Naive thymus-derived CD4-positive, alpha-beta T cell (primary cell): ENCODE measurements at regions of chr4 and their contacts with region 1.

Region 1: GRCh38 chr4:13548984-13549546 is 4.8 kb upstream of the NKX3-2 start:
- DNase-seq: peak; percentile 50 to 87 (median 68)
- ATAC-seq: peak; percentile 85
- H3K4me3 ChIP-seq: no peak overlapping the region
- H3K4me3 Mint-ChIP-seq: peak overlapping the region; percentile 38 to 87 (median 60)
- H3K27ac ChIP-seq: no peak overlapping the region
- H3K27ac Mint-ChIP-seq: peak overlapping the region in 2 of 9 donors; percentile 15 to 27
- H3K4me1 ChIP-seq: peaks cover 13 to 17% of the 10 kb centered on the region in 2 donors
- H3K4me1 Mint-ChIP-seq: peaks cover 21 to 33% (median 30%) of the 10 kb centered on the region in 7 donors
- H3K27me3 ChIP-seq: peaks cover 24 to 25% of the 10 kb centered on the region in 2 donors
- H3K27me3 Mint-ChIP-seq: peaks cover 70 to 75% (median 73%) of the 10 kb centered on the region in 5 donors

Region 2: DNA sequence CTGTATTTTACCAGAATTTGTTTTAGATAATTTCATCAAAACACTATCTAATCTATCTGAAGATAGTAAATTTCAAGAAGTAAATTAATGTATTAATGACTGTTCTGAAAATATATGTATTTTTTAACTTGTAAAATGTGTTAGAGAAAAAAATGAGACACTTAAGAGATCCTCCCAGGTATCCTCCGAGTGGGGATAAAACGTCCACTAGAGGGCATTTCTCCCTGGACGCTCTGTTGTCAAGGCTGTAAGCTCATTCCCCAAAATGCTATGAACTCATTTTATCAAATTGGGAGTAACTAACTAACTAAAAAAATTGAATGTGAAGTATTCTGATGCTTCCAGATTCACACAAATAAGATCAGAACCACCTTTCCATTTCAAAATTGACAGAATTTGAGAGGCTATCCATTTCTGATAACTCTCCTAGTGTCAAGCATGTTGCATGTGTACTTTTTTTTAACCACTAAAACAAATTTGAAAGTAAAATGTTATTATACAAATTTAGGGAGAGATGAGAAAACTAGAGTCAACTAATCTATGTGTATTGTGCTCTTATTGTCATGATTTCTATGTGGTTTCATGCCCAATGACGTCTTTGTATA is 1783.1 kb before region 1 on chr4:
- CTCF ChIA-PET with region 1: no interaction called
- POLR2A ChIA-PET with region 1: no interaction called
- intact Hi-C with region 1: loop called in 1 of 2 experiments (anchors 5 kb)
- DNase-seq: peak in 4 of 9 donors; percentile 1 to 20 (median 8)
- ATAC-seq: no peak
- H3K4me3 ChIP-seq: no peak overlapping the region
- H3K4me3 Mint-ChIP-seq: no peak overlapping the region
- H3K27ac ChIP-seq: no peak overlapping the region
- H3K27ac Mint-ChIP-seq: no peak overlapping the region
- H3K4me1 ChIP-seq: no peaks in the 10 kb centered on the region
- H3K4me1 Mint-ChIP-seq: no peaks in the 10 kb centered on the region
- H3K27me3 ChIP-seq: no peaks in the 10 kb centered on the region
- H3K27me3 Mint-ChIP-seq: peaks cover 0 to 8% (median 5%) of the 10 kb centered on the region in 5 donors

Region 3: GRCh38 chr4:12729384-12729783 is 819.7 kb before region 1 on chr4:
- CTCF ChIA-PET with region 1: no interaction called
- POLR2A ChIA-PET with region 1: no interaction called
- intact Hi-C with region 1: loop called in 1 of 2 experiments (anchors 1 kb)
- DNase-seq: peak in 1 of 9 donors; percentile 9
- ATAC-seq: no peak
- H3K4me3 ChIP-seq: no peak overlapping the region
- H3K4me3 Mint-ChIP-seq: no peak overlapping the region
- H3K27ac ChIP-seq: no peak overlapping the region
- H3K27ac Mint-ChIP-seq: no peak overlapping the region
- H3K4me1 ChIP-seq: no peaks in the 10 kb centered on the region
- H3K4me1 Mint-ChIP-seq: no peaks in the 10 kb centered on the region
- H3K27me3 ChIP-seq: peaks cover 0 to 3% of the 10 kb centered on the region in 2 donors
- H3K27me3 Mint-ChIP-seq: peaks cover 0 to 35% (median 24%) of the 10 kb centered on the region in 5 donors

Region 4: GRCh38 chr4:12852338-12853307 is 696.4 kb before region 1 on chr4:
- CTCF ChIA-PET with region 1: no interaction called
- POLR2A ChIA-PET with region 1: no interaction called
- intact Hi-C with region 1: loop called in 1 of 2 experiments (anchors 1 kb)
- DNase-seq: no peak
- ATAC-seq: no peak
- H3K4me3 ChIP-seq: no peak overlapping the region
- H3K4me3 Mint-ChIP-seq: no peak overlapping the region
- H3K27ac ChIP-seq: no peak overlapping the region
- H3K27ac Mint-ChIP-seq: no peak overlapping the region
- H3K4me1 ChIP-seq: no peaks in the 10 kb centered on the region
- H3K4me1 Mint-ChIP-seq: no peaks in the 10 kb centered on the region
- H3K27me3 ChIP-seq: peaks cover 0 to 3% of the 10 kb centered on the region in 2 donors
- H3K27me3 Mint-ChIP-seq: peaks cover 0 to 21% (median 18%) of the 10 kb centered on the region in 5 donors

Region 5: DNA sequence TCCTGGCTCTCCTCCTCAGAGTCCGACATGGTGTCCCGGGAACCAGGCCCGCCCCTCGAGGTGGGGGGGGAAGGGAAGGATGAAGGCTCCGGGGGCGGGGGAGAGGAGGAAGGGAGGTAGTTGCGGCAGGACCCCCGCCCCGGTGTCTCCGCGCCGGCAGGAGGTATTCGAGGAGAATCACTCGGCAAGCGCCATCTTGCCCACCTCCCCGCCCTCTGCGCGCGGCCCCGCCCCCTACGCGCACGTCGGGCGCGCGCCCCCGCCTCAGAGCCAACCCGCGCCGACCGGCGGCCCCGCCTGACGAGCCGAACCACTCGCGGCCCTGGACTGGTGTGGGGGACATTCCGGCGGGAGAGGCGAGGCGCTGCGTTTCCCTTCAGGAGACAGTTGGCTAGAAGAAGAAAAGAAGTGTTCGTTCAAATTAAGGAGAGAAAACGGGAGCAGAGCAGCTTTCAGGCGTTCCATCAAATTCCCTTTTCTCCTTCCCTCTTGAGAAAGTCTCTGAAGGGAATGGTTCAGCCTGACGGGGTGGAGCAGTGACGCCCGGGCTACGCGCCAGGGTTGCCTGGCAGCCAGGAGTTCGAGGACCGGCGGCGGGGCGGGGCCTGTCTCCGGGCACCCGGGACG is 64.8 kb before region 1 on chr4 and contains the start of gene RAB28:
- CTCF ChIA-PET with region 1: no interaction called
- POLR2A ChIA-PET with region 1: no interaction called
- intact Hi-C with region 1: loop called (anchors 1 to 2 kb)
- DNase-seq: peak; percentile 92 to 97 (median 96)
- ATAC-seq: peak; percentile 95
- H3K4me3 ChIP-seq: peak within 1 kb of the TSS; percentile 81
- H3K4me3 Mint-ChIP-seq: peak within 1 kb of the TSS; percentile 79 to 98 (median 94)
- H3K27ac ChIP-seq: peak within 1 kb of the TSS; percentile 99
- H3K27ac Mint-ChIP-seq: peak within 1 kb of the TSS; percentile 87 to 100 (median 99)
- H3K4me1 ChIP-seq: peaks cover 15 to 18% of the 10 kb centered on the region in 2 donors
- H3K4me1 Mint-ChIP-seq: peaks cover 12 to 42% (median 28%) of the 10 kb centered on the region in 7 donors
- H3K27me3 ChIP-seq: no peaks in the 10 kb centered on the region
- H3K27me3 Mint-ChIP-seq: peaks cover 0 to 17% (median 7%) of the 10 kb centered on the region in 5 donors
- total RNA-seq, gene RAB28: 8.0 to 16.1 (median 14.0) TPM

Region 6: GRCh38 chr4:13527981-13528820 is 20.9 kb before region 1 on chr4:
- CTCF ChIA-PET with region 1: interaction called, 3 read pairs
- POLR2A ChIA-PET with region 1: no interaction called
- intact Hi-C with region 1: loop called (anchors 2 kb)
- DNase-seq: peak in 1 of 9 donors; percentile 17
- ATAC-seq: peak; percentile 49
- H3K4me3 ChIP-seq: no peak overlapping the region
- H3K4me3 Mint-ChIP-seq: peak overlapping the region; percentile 9 to 70 (median 59)
- H3K27ac ChIP-seq: no peak overlapping the region
- H3K27ac Mint-ChIP-seq: peak overlapping the region in 1 of 9 donors; percentile 46
- H3K4me1 ChIP-seq: peaks cover 9 to 15% of the 10 kb centered on the region in 2 donors
- H3K4me1 Mint-ChIP-seq: peaks cover 11 to 45% (median 28%) of the 10 kb centered on the region in 7 donors
- H3K27me3 ChIP-seq: peaks cover 12 to 45% of the 10 kb centered on the region in 2 donors
- H3K27me3 Mint-ChIP-seq: peaks cover 82 to 90% (median 89%) of the 10 kb centered on the region in 5 donors

Region 7: DNA sequence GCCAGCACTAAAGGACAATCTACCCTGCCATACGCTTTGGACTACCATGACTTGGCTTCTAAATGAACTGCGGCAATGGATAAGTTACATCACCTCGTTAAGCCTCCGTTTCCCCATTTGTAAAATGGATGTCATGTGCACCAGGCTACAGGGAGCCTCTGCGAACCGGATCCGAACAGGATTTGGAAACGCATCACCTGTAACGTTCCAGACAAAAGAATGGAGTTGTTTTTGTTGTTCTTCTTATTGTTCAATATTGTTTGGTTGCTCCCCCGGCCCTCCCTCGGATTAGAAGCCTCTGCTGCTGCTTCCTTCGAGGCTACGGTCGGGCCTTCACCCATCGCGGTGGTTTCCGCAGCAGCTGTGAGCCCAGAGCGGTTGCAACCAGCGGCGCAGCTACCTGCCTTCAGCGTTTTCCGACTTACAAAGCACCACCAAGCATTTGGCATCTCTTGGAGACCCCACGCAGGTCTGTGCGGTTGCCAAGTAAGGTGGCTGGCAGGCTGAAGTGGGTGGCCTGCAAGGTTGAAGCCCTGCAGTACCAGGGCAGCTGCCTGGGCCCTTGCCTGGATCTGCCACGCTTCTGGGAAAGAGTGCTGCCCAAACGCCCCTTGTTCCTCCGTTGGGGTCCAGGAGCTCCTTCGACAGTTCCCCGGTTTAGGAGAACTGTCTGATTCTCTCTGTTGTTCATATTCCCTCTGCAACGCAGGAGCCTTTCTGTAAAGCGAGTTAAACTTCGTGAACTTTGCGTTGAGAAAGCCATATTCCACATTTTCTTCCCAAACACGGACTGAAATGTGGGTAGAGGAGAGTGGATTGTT is 11.8 kb before region 1 on chr4:
- CTCF ChIA-PET with region 1: no interaction called
- POLR2A ChIA-PET with region 1: no interaction called
- intact Hi-C with region 1: loop called in 1 of 2 experiments (anchors 1 kb)
- DNase-seq: no peak
- ATAC-seq: no peak
- H3K4me3 ChIP-seq: no peak overlapping the region
- H3K4me3 Mint-ChIP-seq: peak overlapping the region in 4 of 10 donors; percentile 21 to 61 (median 32)
- H3K27ac ChIP-seq: no peak overlapping the region
- H3K27ac Mint-ChIP-seq: peak overlapping the region in 3 of 9 donors; percentile 49 to 54 (median 53)
- H3K4me1 ChIP-seq: peaks cover 0 to 15% of the 10 kb centered on the region in 2 donors
- H3K4me1 Mint-ChIP-seq: peaks cover 11 to 44% (median 27%) of the 10 kb centered on the region in 7 donors
- H3K27me3 ChIP-seq: peaks cover 20 to 69% of the 10 kb centered on the region in 2 donors
- H3K27me3 Mint-ChIP-seq: peaks cover 85 to 97% (median 90%) of the 10 kb centered on the region in 5 donors

Region 8: DNA sequence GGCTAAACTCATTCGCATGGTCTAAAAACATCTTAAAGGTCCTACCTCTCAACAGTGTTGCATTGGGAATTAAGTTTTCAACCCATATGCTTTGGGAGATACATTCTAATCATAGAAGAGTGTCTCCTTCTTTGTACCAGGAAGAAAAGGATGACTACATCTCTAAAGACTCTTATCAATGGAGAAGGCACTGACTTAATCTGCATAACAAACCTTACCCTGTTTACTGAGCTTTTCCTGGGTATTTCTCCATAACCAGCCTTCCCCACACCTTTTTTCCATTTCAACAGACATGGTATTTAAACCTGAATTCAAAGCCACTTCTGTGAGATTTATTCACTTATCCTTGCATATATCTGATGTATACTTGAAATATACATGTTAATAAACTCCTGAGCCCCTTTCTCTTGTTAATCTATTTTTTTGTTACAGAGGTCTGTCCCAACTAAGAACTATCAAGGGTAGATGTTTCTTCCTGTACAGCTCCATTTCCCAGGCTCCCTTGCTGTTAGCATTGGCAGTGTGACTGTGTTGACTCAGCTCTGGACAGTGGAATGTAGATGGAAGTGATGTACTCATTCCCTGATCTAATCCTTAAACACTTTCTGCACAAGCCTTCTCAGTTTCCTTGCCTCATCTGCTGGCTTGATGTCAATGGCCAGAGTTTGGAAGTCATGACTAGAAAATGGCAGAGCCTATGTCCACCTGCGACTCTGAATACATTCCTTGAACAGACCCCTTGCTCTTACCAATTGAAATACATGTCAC is 1304.3 kb after region 1 on chr4:
- CTCF ChIA-PET with region 1: no interaction called
- POLR2A ChIA-PET with region 1: no interaction called
- intact Hi-C with region 1: no loop called
- DNase-seq: no peak
- ATAC-seq: no peak
- H3K4me3 ChIP-seq: no peak overlapping the region
- H3K4me3 Mint-ChIP-seq: no peak overlapping the region
- H3K27ac ChIP-seq: no peak overlapping the region
- H3K27ac Mint-ChIP-seq: no peak overlapping the region
- H3K4me1 ChIP-seq: no peaks in the 10 kb centered on the region
- H3K4me1 Mint-ChIP-seq: peaks cover 0 to 22% (median 0%) of the 10 kb centered on the region in 7 donors
- H3K27me3 ChIP-seq: no peaks in the 10 kb centered on the region
- H3K27me3 Mint-ChIP-seq: peaks cover 0 to 32% (median 18%) of the 10 kb centered on the region in 5 donors